Sigmoid colon (tissue), 7 donors: ENCODE measurements at regions of chr14 and their contacts with region 1.

Region 1: DNA sequence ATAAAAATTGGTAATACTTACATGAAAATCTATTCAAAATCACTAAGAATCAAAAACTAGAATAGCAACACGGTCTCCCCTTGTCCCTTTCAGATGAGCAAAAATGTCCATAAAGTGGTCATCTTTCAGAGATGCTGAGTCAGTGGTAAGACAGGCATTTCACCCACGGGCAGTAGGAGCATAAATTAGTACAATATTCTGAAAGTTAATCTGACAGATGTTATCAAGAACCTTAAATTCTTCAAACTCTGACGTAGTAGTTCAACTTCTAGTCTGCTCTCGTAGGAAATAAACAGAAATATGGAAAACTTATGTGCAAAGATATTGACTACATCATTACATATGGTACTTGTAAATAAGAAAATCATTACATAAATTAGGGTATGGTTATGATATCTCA is 33.1 kb upstream of the GNPNAT1 start:
- DNase-seq: no peak
- H3K4me3 ChIP-seq: no peak overlapping the region
- H3K27ac ChIP-seq: no peak overlapping the region
- H3K4me1 ChIP-seq: peaks cover 0 to 3% (median 0%) of the 10 kb centered on the region in 4 donors
- H3K27me3 ChIP-seq: no peaks in the 10 kb centered on the region
- CTCF ChIP-seq: no peak
- EP300 ChIP-seq: no peak
- POLR2A ChIP-seq: no peak

Region 2: DNA sequence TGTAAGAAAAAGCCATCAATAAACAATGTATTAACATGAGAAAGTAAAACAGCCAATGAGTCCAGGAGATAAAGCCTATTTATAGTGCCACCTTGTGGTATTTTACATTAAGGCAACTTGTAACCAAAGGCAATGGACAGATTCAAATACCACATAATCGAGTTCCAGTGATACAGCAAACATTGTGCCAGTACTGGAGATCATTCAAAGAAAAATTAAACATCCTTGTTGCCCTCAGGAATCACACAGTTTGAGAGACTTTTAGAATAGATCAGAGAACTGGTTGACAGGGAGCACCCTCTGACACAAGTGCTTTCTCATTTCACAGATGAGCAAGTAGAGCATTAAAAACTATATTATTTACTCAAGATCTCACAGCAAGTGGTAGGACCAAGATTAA is 230.5 kb after region 1 on chr14:
- intact Hi-C with region 1: loop called (anchors 2 kb)
- DNase-seq: no peak
- H3K4me3 ChIP-seq: no peak overlapping the region
- H3K27ac ChIP-seq: peak overlapping the region in 1 of 4 donors; percentile 24
- H3K4me1 ChIP-seq: peaks cover 0 to 7% (median 0%) of the 10 kb centered on the region in 4 donors
- H3K27me3 ChIP-seq: no peaks in the 10 kb centered on the region
- CTCF ChIP-seq: peak; percentile 31 to 81 (median 64)
- EP300 ChIP-seq: no peak
- POLR2A ChIP-seq: no peak

Region 3: DNA sequence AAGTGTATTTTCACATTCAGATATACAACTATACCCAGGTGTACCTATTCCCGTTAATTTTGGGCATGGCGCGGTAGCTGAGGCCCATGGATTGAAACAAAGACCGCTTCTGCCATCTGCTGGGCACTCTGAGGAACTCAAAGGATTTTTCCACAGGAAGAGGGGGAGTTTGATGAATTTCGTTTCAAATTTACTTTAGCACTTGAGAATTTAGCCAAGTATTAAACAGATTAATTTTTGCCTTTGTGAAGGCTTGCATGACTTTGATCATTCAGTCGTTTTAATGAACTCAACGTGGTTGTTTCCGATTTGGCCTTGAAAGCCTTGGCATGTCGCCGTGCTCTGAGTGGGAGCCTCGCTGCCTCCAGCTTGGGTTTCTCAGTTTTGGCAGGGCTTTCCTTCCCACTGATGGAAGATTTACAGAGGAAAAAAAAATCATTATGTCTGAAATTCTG is 481.8 kb after region 1 on chr14:
- intact Hi-C with region 1: loop called (anchors 5 kb)
- DNase-seq: peak; percentile 73
- H3K4me3 ChIP-seq: peak overlapping the region; percentile 15 to 45 (median 39)
- H3K27ac ChIP-seq: peak overlapping the region; percentile 15 to 71 (median 52)
- H3K4me1 ChIP-seq: peaks cover 0 to 25% (median 17%) of the 10 kb centered on the region in 4 donors
- H3K27me3 ChIP-seq: no peaks in the 10 kb centered on the region
- CTCF ChIP-seq: peak; percentile 53 to 78 (median 72)
- EP300 ChIP-seq: no peak
- POLR2A ChIP-seq: no peak